Natural killer cell (primary cell): ENCODE measurements at regions of chr14 and their contacts with region 1.

Region 1: GRCh38 chr14:20757965-20758364 is 10.2 kb upstream of the EDDM3B start:
- DNase-seq: peak; percentile 21 to 61
- ATAC-seq: peak in 1 of 3 donors; percentile 59
- H3K4me3 ChIP-seq: no peak overlapping the region
- H3K4me3 Mint-ChIP-seq: no peak overlapping the region
- H3K27ac ChIP-seq: no peak overlapping the region
- H3K27ac Mint-ChIP-seq: no peak overlapping the region
- H3K4me1 ChIP-seq: no peaks in the 10 kb centered on the region
- H3K4me1 Mint-ChIP-seq: peaks cover 0 to 5% of the 10 kb centered on the region in 2 donors
- H3K27me3 ChIP-seq: no peaks in the 10 kb centered on the region
- H3K27me3 Mint-ChIP-seq: no peaks in the 10 kb centered on the region
- CTCF ChIP-seq: peak; percentile 46

Region 2: GRCh38 chr14:20578784-20579502 is 179.0 kb before region 1 on chr14:
- intact Hi-C with region 1: no loop called
- DNase-seq: no peak
- ATAC-seq: no peak
- H3K4me3 ChIP-seq: no peak overlapping the region
- H3K4me3 Mint-ChIP-seq: no peak overlapping the region
- H3K27ac ChIP-seq: no peak overlapping the region
- H3K27ac Mint-ChIP-seq: no peak overlapping the region
- H3K4me1 ChIP-seq: no peaks in the 10 kb centered on the region
- H3K4me1 Mint-ChIP-seq: no peaks in the 10 kb centered on the region
- H3K27me3 ChIP-seq: no peaks in the 10 kb centered on the region
- H3K27me3 Mint-ChIP-seq: peaks cover 4 to 13% of the 10 kb centered on the region in 2 donors
- CTCF ChIP-seq: no peak

Region 3: DNA sequence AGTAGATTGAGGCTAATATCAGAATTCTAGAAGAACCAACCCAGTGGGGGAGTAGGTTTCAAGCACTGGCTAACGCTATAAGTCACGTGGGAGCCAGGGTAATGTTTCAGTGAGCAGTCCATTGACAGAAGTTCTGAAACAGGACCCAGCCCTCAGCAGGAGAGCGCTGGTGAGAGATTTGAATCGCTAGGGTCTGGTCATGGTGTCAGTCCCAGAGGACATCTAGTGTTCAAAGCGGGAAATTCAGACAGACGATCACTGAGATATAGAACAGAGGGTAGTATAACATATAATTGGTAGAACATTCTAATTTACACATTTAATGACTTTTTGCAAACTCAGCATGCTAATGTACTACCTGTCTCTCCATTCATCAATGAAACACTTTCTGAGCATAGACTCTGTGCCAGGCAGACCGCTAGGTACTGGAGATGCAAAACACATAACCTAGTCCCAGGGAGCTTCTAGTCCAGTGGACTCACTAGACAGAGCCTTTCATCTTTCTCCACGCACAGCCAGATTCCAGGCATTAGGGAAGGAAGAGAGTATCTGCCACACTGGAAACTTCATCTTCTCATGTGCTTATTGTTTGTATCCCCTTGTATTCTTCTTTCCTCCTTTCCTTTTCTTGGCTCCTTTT is 97.8 kb after region 1 on chr14:
- intact Hi-C with region 1: loop called (anchors 1 kb)
- DNase-seq: peak; percentile 21 to 74
- ATAC-seq: peak; percentile 85 to 94 (median 91)
- H3K4me3 ChIP-seq: no peak overlapping the region
- H3K4me3 Mint-ChIP-seq: no peak overlapping the region
- H3K27ac ChIP-seq: no peak overlapping the region
- H3K27ac Mint-ChIP-seq: no peak overlapping the region
- H3K4me1 ChIP-seq: peaks cover 2% of the 10 kb centered on the region
- H3K4me1 Mint-ChIP-seq: peaks cover 0 to 6% of the 10 kb centered on the region in 2 donors
- H3K27me3 ChIP-seq: no peaks in the 10 kb centered on the region
- H3K27me3 Mint-ChIP-seq: peaks cover 0 to 23% of the 10 kb centered on the region in 2 donors
- CTCF ChIP-seq: peak; percentile 77

Region 4: DNA sequence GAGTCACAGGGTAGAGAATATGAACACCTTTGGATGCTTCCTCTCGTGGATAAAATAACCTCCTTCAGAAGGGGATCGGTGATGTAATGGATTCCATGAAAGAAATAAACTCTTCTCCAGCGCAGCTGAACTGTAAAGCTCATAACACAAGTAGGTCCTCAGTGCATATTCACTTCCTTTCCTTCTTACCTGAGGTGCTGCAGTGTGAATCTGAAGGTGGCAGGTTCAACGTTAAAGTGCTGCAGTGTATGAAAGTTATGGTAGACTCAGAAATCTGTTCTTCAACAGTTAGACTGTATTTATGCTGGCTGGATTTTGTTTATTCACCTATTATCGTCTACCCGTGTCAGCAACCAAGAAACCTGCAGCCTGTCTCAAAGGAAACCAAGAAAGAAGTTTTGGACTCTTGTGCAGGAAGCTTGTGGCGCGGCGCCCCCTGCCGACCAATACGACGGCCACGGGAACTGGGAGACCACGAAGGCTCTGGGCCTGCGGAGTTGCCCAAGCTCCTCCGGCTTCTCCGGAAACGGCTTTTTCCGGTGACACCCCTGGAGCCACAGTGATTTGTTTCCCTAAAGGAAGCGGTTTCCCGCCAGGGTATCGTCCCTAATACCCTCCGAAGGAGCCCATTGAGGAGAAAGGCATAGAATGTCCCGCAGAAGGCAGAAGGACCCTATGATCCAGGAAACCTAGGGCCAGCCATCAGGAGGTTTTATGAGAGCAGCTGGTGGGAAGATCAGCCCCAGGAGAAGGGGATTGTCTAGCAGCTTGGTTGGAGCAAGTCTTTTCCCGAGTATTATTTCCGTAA is 115.6 kb after region 1 on chr14:
- intact Hi-C with region 1: loop called (anchors 5 kb)
- DNase-seq: peak; percentile 69 to 82
- ATAC-seq: peak; percentile 83 to 90 (median 87)
- H3K4me3 ChIP-seq: no peak overlapping the region
- H3K4me3 Mint-ChIP-seq: no peak overlapping the region
- H3K27ac ChIP-seq: no peak overlapping the region
- H3K27ac Mint-ChIP-seq: peak overlapping the region in 1 of 2 donors; percentile 18
- H3K4me1 ChIP-seq: peaks cover 7% of the 10 kb centered on the region
- H3K4me1 Mint-ChIP-seq: peaks cover 8 to 13% of the 10 kb centered on the region in 2 donors
- H3K27me3 ChIP-seq: no peaks in the 10 kb centered on the region
- H3K27me3 Mint-ChIP-seq: peaks cover 10 to 29% of the 10 kb centered on the region in 2 donors
- CTCF ChIP-seq: peak; percentile 79